Right ventricle myocardium inferior (tissue), 1 donor: ENCODE measurements at regions of chr17 and their contacts with region 1.

Region 1: GRCh38 chr17:8118769-8119580 is 661 bp upstream of the ALOXE3 start:
- DNase-seq: peak; percentile 96
- ATAC-seq: peak; percentile 86

Region 2: DNA sequence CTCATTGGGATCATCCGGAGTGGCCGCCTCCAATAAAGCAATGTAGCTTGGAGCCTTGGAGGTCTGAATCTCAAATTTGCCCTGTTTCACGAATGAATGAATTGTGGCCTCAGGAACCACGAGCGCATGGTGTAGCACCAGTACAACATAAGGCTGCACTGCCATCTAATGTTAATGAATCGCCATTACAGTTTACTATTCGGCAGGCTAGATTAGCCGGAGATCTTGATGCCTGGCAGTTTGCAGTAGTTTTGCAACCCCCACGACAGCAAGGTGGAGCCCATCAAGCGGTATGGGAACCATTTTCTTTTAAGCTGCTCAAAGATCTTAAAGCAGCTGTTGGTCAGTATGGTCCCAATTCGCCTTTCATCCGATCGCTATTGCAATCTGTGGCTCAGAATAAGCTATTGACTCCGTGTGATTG is 61.3 kb before region 1 on chr17:
- intact Hi-C with region 1: loop called (anchors 2 kb)
- DNase-seq: no peak
- ATAC-seq: peak; percentile 88

Region 3: DNA sequence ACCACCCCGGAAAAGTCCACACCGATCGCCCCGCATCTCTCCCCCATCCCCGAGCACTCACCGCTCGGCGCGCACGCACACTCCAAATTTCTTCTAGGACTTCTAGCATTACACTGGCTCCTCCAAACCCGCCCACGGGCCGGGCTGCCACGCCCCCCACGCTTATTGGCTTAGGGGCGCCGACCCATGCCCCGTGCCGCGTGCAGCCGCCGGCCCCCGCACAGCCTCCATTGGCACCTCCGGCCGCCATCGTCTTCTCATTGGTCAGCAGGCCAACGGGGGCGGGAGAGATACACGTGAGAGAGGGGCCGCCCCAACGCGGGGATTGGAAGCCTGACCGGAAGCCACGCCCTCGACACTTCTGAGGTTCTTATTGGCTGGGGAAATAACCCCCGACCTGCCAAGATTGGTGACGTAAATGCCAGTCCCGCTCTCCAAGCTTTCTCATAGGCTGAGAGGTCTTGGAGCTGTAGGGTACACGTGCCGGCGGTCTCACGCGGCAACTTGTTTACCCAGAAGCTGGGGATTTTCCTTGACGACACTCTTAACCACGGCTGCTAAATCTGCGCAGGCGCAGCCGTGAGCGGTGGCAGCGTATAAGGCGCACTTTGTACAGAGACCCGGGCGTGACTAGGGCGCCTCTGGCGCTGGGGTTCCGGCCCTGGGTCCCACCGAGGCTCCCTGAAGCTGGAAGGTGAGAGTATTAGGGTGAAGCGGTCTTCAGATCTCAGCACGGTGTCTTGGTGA is 37.4 kb after region 1 on chr17:
- intact Hi-C with region 1: loop called (anchors 1 kb)
- DNase-seq: peak; percentile 100
- ATAC-seq: peak; percentile 66

Region 4: DNA sequence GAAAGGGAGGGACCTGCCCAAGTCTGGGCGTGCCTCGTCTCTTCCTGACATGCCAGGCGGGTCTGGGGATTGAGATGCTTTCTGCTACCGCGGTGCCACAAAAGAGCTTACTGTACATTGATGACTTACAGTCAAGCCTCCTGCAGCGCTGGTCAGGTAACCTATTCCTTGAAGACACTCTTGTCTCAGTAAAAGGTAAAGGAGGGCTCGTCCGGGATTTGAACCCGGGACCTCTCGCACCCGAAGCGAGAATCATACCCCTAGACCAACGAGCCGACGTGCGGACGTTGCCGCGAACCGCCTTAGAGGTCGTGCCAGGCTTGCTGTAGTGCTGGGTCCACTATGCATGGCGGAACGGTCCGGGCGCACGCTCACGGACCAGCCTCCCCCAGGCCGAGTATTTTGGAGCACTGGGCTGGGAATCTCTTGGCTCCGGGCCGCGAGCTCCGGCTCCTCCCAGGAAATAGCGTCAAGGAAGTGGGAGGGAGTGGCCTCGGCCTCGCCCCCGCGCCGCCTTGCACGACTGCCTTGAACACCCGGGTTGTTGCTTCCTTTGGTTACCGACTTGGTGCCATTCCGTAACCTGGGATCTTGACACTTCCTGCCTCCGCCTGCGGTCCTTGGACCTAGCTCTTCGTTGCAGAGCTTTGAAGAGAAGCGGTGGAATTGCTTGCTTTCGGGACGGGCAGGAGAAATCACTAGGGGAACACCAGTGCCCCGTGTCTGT is 103.8 kb after region 1 on chr17:
- intact Hi-C with region 1: loop called (anchors 2 kb)
- DNase-seq: peak; percentile 97
- ATAC-seq: peak; percentile 75